Left cardiac atrium (tissue), 4 donors: ENCODE measurements at regions of chr5 and their contacts with region 1.

Region 1: DNA sequence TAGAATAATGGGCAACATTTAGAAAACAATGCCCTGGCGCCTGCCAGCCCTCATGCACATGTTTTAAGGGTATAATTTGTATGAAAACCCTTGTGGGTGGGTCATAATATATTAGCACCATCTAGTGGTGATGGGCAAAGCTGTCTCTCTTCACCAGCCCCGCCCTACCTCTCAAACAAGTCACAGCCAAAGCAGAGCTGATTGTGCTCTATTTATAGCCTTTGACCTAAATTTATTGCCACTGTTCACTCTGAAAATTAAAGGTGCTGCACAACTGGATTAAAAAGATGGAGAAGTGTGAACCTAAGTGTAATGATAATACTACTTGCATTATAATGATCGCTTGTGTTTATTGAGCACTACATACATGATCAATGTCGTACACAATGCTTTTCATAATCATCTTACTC is 131.9 kb upstream of the ANKH start:
- DNase-seq: peak; percentile 66
- ATAC-seq: peak; percentile 87 to 96

Region 2: GRCh38 chr5:14727428-14727865 is 276.1 kb before region 1 on chr5:
- intact Hi-C with region 1: loop called (anchors 1 to 5 kb)
- DNase-seq: peak; percentile 79
- ATAC-seq: peak; percentile 71 to 83

Region 3: DNA sequence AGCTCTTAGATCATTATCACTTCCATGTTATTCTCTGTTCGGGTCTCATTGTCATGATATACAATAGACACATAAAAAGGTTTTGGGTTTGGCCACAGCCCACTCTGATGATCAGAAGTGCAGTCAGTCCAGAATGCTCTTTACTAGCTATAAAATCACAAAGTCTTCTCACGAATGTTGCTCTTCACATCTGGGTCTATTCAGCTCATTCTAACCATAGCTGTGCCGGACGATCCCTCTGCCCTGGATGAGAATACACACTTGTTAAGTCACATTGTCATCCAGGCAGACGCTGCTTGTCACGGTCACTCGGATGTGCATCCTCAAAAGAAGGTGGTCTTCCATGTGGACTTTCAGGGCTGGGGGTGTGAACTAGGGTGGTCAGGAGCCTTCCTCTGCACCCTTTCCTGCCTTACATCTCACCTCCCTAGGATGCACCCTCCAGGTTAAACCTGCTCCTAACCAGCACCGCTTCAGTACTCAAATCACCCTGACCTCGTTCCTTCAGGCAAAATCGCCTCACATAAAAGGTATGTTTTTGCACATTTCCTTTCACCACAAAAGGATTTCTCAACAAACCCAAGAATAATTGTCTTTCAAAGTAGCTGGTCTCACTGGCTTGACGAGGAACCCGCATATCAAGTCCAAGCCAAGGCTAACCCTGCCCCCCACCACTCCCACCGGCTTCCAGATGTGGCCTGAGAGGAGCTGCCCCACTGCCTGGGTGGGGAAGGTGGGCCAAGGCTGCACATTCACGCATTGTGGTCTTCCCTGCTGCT is 153.8 kb before region 1 on chr5:
- intact Hi-C with region 1: loop called in 1 of 2 experiments (anchors 10 kb)
- DNase-seq: no peak
- ATAC-seq: no peak

Region 4: GRCh38 chr5:14871210-14872069 is 132.1 kb before region 1 on chr5 and contains the start of gene ANKH:
- intact Hi-C with region 1: loop called in 1 of 2 experiments (anchors 5 kb)
- DNase-seq: peak; percentile 88
- ATAC-seq: peak; percentile 88 to 94
- total RNA-seq, gene ANKH: 113 to 138 TPM

Region 5: GRCh38 chr5:14946815-14947640 is 56.5 kb before region 1 on chr5:
- intact Hi-C with region 1: loop called in 1 of 2 experiments (anchors 5 kb)
- DNase-seq: no peak
- ATAC-seq: peak; percentile 41 to 47

Region 6: DNA sequence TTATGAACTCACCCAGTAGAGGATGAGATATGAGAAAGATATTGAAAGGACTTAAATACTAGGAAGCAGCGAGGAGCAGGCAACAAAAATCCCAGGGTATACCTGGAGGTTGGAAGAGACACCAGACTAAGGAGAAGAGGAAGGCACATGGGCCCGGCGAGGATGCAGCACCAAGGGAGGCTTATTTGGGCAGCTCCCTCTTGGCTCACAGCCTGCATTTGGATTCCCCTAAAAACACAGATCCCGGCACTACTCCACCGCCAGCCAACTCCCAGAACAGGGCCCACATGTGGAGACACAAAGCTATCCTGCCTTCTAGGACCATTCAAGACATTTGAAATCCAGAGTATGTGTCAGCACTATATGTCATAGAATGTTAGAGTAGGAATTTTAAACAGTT is 296.6 kb after region 1 on chr5:
- intact Hi-C with region 1: no loop called
- DNase-seq: no peak
- ATAC-seq: no peak